Heart left ventricle (tissue), 16 donors: ENCODE measurements at regions of chr5 and their contacts with region 1.

Region 1: DNA sequence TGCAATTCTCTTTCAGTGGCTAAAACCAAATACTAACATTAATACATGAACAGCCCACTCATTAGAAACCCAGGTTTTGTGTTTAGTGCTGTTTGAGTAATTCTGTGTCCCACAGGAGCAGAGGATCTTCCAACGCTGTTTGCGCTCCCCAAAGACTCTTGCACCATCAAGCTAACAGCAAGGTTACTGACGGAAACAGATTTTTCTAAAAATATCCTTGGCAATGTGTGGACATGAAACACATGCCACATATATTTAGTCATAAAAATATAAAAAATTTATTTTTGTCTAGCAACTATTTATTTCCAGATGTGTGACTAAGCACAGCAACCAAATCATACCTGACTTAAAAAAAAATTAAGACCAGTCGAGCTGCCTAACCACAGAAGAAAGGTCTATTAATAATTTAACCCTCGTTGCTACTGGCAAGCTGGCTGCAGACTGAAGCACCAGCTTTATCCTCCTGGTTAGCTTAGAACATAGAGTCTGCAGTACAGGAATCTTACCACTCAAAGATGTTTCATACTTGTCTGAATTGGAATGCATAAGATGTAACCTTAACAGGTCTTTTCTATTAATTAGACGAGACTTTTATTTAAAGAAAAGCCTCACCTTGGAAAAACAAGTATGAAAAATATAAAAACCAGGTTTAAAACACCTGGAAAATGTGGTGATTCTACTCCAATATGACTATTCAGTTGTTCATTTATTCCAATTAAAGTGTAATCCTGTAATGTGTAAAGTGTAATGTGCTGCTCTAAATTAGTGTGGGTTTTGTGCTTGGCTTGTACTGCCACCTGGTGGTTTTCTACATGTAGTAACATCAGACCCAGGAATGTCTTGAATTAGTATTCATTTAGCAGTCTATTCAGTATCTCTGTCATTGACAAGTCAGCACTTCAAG is 272.5 kb downstream of the EPB41L4A start:
- DNase-seq: peak in 4 of 5 donors; percentile 44 to 68 (median 56)
- ATAC-seq: peak; percentile 77 to 90 (median 88)
- H3K4me3 ChIP-seq: peak overlapping the region in 1 of 12 donors; percentile 4
- H3K27ac ChIP-seq: peak overlapping the region in 5 of 12 donors; percentile 11 to 51 (median 35)
- H3K4me1 ChIP-seq: peaks cover 0 to 36% (median 17%) of the 10 kb centered on the region in 12 donors
- H3K27me3 ChIP-seq: no peaks in the 10 kb centered on the region
- CTCF ChIP-seq: peak; percentile 78 to 94 (median 86)
- POLR2A ChIP-seq: no peak

Region 2: GRCh38 chr5:111223889-111224563 is 922.5 kb before region 1 on chr5 and contains the start of gene CAMK4:
- intact Hi-C with region 1: loop called in 1 of 10 experiments (anchors 5 kb)
- DNase-seq: peak; percentile 54 to 79 (median 58)
- ATAC-seq: peak; percentile 47 to 91 (median 88)
- H3K4me3 ChIP-seq: peak within 1 kb of the TSS; percentile 43 to 67 (median 56)
- H3K27ac ChIP-seq: peak within 1 kb of the TSS in 2 of 12 donors; percentile 19 to 54
- H3K4me1 ChIP-seq: peaks cover 0 to 16% (median 5%) of the 10 kb centered on the region in 12 donors
- H3K27me3 ChIP-seq: peaks cover 0 to 36% (median 14%) of the 10 kb centered on the region in 9 donors
- CTCF ChIP-seq: peak in 3 of 12 donors; percentile 6 to 33 (median 32)
- POLR2A ChIP-seq: no peak
- total RNA-seq, gene CAMK4: 0.02 to 3.7 (median 0.55) TPM in 6 of 9 donors, not detected in the others

Region 3: GRCh38 chr5:111537141-111538024 is 609.2 kb before region 1 on chr5:
- intact Hi-C with region 1: loop called in 6 of 10 experiments (anchors 5 kb)
- DNase-seq: no peak
- ATAC-seq: no peak
- H3K4me3 ChIP-seq: no peak overlapping the region
- H3K27ac ChIP-seq: no peak overlapping the region
- H3K4me1 ChIP-seq: peaks cover 0 to 11% (median 0%) of the 10 kb centered on the region in 12 donors
- H3K27me3 ChIP-seq: no peaks in the 10 kb centered on the region
- CTCF ChIP-seq: no peak
- POLR2A ChIP-seq: no peak

Region 4: GRCh38 chr5:111757355-111758283 is 389.0 kb before region 1 on chr5:
- intact Hi-C with region 1: loop called (anchors 2 to 10 kb)
- DNase-seq: peak; percentile 97 to 98 (median 97)
- ATAC-seq: peak; percentile 85 to 93 (median 90)
- H3K4me3 ChIP-seq: peak overlapping the region; percentile 48 to 89 (median 70)
- H3K27ac ChIP-seq: peak overlapping the region; percentile 85 to 98 (median 92)
- H3K4me1 ChIP-seq: peaks cover 0 to 42% (median 29%) of the 10 kb centered on the region in 12 donors
- H3K27me3 ChIP-seq: no peaks in the 10 kb centered on the region
- CTCF ChIP-seq: peak in 7 of 12 donors; percentile 30 to 52 (median 45)
- POLR2A ChIP-seq: no peak

Region 5: GRCh38 chr5:111853748-111854147 is 292.8 kb before region 1 on chr5:
- intact Hi-C with region 1: loop called in 2 of 10 experiments (anchors 10 kb)
- DNase-seq: peak in 3 of 5 donors; percentile 9 to 26 (median 18)
- ATAC-seq: peak in 2 of 4 donors; percentile 51 to 60
- H3K4me3 ChIP-seq: no peak overlapping the region
- H3K27ac ChIP-seq: no peak overlapping the region
- H3K4me1 ChIP-seq: peaks cover 0 to 37% (median 12%) of the 10 kb centered on the region in 12 donors
- H3K27me3 ChIP-seq: no peaks in the 10 kb centered on the region
- CTCF ChIP-seq: no peak
- POLR2A ChIP-seq: no peak

Region 6: DNA sequence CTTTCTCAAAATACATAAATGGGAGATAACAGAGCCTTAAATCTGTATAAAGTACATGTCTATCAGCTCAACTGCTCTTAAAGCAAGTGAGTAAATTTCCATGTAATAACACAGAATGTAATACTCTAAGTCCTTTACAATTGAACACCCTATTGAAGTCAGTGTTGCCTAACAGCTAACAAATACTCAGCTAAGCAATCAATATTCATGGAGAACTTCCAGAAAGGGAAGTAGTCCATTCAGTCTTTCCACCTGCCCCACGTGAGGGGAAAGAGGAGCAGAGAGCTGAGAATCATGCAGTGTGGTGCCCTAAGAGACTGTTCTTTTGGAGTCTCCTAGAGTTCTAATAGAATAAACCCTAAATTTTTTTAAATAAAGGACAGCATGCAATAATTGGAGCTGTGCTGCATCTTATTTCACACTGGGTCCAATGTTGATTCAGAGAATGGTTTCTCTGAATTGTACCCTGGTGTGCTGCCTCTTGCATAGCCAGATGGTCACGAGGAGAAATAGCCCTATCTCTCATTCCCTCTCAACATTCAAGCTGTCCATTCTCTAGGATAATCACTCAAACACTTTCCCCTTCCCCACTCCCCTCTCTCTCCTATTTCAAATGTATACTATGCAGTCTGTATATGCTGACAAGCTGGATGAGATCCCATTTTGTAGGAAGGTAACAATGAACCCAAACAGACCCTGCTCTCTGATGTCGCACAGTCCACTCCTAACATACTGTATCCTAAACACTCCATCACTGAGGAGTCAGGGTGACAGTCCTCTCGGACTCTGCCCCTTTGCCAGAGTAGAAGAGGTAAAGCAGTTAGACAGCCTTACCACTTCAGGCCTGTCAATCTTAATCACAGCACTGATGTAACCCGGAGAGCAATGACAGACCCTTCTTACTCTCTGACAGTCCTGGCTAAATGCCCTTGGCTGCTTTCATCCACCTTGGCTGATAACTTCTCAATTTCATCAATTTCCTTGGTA is 137.7 kb after region 1 on chr5:
- intact Hi-C with region 1: no loop called
- DNase-seq: no peak
- ATAC-seq: peak in 1 of 4 donors; percentile 61
- H3K4me3 ChIP-seq: no peak overlapping the region
- H3K27ac ChIP-seq: no peak overlapping the region
- H3K4me1 ChIP-seq: peaks cover 0 to 15% (median 0%) of the 10 kb centered on the region in 12 donors
- H3K27me3 ChIP-seq: no peaks in the 10 kb centered on the region
- CTCF ChIP-seq: no peak
- POLR2A ChIP-seq: no peak